H1 (cell line): ENCODE measurements at regions of chr2 and their contacts with region 1.

Region 1: GRCh38 chr2:96856776-96857673 is 791 bp downstream of the ANKRD39 start:
- DNase-seq: peak in 1 of 2 experiments; percentile 73
- H3K4me3 ChIP-seq: peak overlapping the region; percentile 49 to 75 (median 68)
- H3K27ac ChIP-seq: no peak overlapping the region; the same call in 1 of the 2 replicates
- H3K4me1 ChIP-seq: peaks cover 3 to 11% (median 8%) of the 10 kb centered on the region in 4 experiments
- H3K27me3 ChIP-seq: no peaks in the 10 kb centered on the region
- CTCF ChIP-seq: no peak
- EP300 ChIP-seq: no peak
- POLR2A ChIP-seq: peak in 1 of 2 experiments; percentile 63; a peak in 2 of 3 replicates
- RAD21 ChIP-seq: no peak

Region 2: GRCh38 chr2:96739633-96740428 is 117.2 kb before region 1 on chr2 and contains the start of gene LMAN2L:
- CTCF ChIA-PET with region 1: no interaction called
- POLR2A ChIA-PET with region 1: no interaction called
- DNase-seq: peak; percentile 85 to 92
- H3K4me3 ChIP-seq: peak within 1 kb of the TSS; percentile 66 to 97 (median 77)
- H3K27ac ChIP-seq: peak within 1 kb of the TSS; percentile 53
- H3K4me1 ChIP-seq: peaks cover 0 to 3% (median 1%) of the 10 kb centered on the region in 4 experiments; a peak in 3 of 7 replicates
- H3K27me3 ChIP-seq: no peaks in the 10 kb centered on the region
- CTCF ChIP-seq: no peak
- EP300 ChIP-seq: no peak
- POLR2A ChIP-seq: peak in 1 of 2 experiments; percentile 79; a peak in 1 of 3 replicates
- RAD21 ChIP-seq: no peak
- total RNA-seq, gene LMAN2L: 14.3 and 15.7 TPM in 2 replicates

Region 3: DNA sequence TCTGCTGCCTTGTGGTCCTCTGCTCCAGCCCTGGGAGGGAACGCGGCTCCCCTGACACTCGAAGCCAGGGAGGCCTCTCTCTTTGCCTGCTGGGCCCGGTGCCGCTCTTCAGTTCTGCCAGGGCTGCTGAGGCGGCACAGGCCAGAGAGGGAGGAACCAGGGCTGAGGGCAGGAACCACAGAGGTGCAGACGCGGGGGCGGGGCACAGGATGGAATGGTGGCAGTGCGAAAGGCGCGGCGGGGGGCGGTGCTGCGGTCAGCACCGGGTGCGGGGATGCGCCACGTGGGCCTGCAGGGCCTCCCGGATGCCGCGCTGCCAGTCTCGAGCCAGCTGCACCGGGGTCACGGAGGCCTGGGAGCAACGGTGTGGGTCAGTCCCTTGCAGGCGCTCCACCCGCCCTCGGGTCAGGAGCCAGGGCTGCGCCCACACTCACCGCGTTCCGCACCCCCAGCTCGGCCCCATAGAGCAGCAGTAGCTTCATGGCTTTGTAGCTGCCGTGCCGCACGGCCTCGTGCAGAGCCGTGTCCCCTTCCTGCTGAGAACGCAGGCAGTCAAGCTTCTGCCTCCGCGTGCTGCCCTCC is 17.6 kb before region 1 on chr2:
- CTCF ChIA-PET with region 1: interaction called, 22 read pairs
- POLR2A ChIA-PET with region 1: interaction called, 18 read pairs
- DNase-seq: peak in 1 of 2 experiments; percentile 64
- H3K4me3 ChIP-seq: no peak overlapping the region
- H3K27ac ChIP-seq: no peak overlapping the region
- H3K4me1 ChIP-seq: peaks cover 0 to 3% (median 0%) of the 10 kb centered on the region in 4 experiments; a peak in 1 of 7 replicates
- H3K27me3 ChIP-seq: no peaks in the 10 kb centered on the region
- CTCF ChIP-seq: no peak
- EP300 ChIP-seq: no peak
- POLR2A ChIP-seq: peak in 1 of 2 experiments; percentile 8; a peak in 1 of 3 replicates
- RAD21 ChIP-seq: no peak

Region 4: DNA sequence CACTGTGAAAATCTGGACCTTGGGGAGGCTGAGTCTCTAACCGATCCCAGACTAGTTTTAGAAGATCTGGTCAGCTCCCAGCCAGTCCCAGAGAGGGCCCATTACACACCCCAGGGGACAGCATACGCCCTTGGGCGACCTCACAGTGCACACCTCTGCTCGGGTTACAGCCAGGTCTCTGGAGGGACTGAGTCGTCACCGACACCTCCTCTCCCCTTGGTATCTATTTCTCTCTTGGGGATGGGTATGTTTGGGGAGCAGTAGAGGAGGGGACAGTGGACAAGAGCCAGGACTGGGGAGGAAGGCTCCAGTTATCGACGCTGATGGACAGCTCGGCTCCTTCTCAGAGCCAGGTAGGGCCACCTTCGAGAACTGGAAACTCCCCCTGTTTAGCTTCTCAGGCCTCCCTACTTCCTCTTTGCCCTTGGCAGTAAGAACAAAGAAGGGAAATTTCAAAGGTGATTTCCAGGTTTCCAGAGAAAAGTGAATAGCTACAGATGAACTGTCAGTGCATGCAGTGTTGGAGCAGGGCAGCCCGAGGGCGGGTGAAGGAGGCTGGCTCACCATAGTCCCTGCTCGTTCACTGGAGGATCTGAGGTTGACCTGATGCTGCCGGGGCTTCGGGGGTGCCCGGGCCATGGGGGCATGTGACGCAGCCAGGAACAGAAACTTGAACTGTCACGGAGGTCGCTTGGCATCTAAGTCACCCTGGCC is 17.2 kb after region 1 on chr2:
- CTCF ChIA-PET with region 1: interaction called, 48 read pairs
- POLR2A ChIA-PET with region 1: interaction called, 49 read pairs
- DNase-seq: no peak
- H3K4me3 ChIP-seq: no peak overlapping the region
- H3K27ac ChIP-seq: no peak overlapping the region
- H3K4me1 ChIP-seq: peaks cover 11 to 42% (median 28%) of the 10 kb centered on the region in 4 experiments
- H3K27me3 ChIP-seq: peaks cover 0 to 3% (median 0%) of the 10 kb centered on the region in 4 experiments; a peak in 2 of 7 replicates
- CTCF ChIP-seq: no peak
- EP300 ChIP-seq: no peak
- POLR2A ChIP-seq: no peak
- RAD21 ChIP-seq: no peak

Region 5: DNA sequence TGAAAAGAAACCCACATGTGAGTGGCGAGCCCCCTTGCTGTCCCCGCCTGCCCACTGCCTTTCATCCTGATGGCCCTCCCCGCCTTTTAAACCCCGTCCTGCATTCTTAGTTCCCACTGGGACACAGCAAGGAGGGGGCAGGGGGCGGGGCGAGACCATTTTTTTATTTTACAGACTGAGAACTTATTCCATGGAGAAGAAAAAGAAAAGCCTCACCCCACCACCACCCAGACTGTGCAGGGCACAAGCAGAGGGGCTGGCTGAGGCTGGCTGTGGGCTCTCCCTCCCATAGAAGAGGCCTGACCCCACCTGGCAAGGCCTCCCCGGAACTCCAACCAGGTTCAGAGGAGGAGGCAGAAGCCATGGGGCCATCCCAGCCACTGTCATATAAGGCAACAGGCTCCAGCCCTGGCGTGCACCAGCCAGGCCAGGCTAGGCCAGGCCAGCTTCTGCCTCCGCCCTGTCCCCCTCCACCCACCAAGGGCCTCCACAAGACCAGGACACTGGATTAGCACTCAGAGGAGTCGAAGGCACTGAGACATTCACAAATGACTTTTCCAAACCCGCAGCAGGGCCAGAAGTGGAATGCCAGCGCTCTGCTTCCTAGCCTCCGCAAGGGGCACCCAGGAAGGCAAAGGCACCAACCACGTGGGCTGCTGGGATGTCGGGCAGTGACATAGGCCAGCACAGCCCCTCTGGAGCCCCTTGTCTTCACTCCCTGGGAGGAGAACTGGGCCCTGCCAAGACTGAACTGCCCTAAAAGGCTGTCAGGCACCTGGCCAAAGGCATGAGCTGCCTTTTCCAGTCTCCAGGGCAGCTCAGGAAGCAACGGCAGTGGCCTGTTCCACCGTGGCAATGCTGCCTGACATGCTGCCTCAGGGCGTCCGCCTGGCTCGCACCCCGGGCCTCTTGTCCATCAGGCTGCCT is 50.4 kb after region 1 on chr2:
- CTCF ChIA-PET with region 1: interaction called, 6 read pairs
- POLR2A ChIA-PET with region 1: interaction called, 11 read pairs
- DNase-seq: peak in 1 of 2 experiments; percentile 72
- H3K4me3 ChIP-seq: peak overlapping the region in 2 of 4 experiments; percentile 5 to 10; a peak in 3 of 8 replicates
- H3K27ac ChIP-seq: no peak overlapping the region
- H3K4me1 ChIP-seq: peaks cover 0 to 29% (median 25%) of the 10 kb centered on the region in 4 experiments; a peak in 6 of 7 replicates
- H3K27me3 ChIP-seq: peaks cover 0 to 2% (median 0%) of the 10 kb centered on the region in 4 experiments; a peak in 2 of 7 replicates
- CTCF ChIP-seq: no peak
- EP300 ChIP-seq: no peak
- POLR2A ChIP-seq: no peak
- RAD21 ChIP-seq: peak in 1 of 2 experiments; percentile 30; a peak in 1 of 4 replicates

Region 6: DNA sequence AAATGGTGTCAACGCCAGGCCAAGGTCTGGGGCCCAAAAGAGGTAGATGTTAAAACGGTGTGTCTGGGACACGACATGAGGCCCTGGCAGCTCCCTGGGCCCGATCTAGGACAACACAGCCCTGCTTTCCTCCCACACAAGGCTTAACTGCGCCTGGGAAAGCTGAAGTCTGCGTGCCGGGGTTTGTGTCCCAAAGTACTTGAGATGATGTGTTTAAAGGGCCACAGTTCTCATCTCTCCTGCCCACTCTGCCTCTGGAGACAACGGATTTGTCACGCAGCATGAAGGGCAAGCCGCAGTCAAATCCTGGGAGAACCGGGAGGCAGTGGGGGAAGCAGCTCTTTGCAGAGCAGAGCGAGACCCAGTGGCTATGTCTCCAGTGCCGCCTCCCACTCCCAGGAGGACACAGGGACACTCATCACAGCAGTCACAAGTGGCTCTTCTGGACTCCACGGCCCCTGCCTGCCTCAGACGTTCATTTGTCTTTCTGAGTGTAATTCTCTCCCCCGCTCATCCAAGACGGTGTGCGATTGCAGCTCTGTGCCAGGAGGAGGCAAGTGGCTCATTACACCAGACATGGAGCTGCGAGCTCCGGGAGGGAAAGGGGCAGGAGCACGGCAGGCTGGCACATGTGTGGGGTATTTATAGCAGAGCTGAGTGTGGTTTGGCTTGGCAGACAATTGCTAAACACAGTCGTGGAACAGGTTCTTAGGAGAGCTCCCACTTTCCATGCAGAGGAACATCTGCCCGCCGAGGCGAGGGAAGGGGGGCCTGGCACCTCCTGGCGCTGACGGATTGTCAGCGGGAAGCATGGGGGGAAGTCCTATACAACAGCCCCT is 70.6 kb after region 1 on chr2:
- CTCF ChIA-PET with region 1: interaction called, 10 read pairs
- POLR2A ChIA-PET with region 1: interaction called, 4 read pairs
- DNase-seq: no peak
- H3K4me3 ChIP-seq: no peak overlapping the region
- H3K27ac ChIP-seq: no peak overlapping the region
- H3K4me1 ChIP-seq: peaks cover 0 to 3% (median 0%) of the 10 kb centered on the region in 4 experiments; a peak in 2 of 7 replicates
- H3K27me3 ChIP-seq: peaks cover 0 to 3% (median 1%) of the 10 kb centered on the region in 4 experiments; a peak in 1 of 7 replicates
- CTCF ChIP-seq: peak; percentile 16 to 20 (median 20); a peak in 2 of 4 replicates
- EP300 ChIP-seq: no peak
- POLR2A ChIP-seq: no peak
- RAD21 ChIP-seq: peak in 1 of 2 experiments; percentile 30; a peak in 1 of 4 replicates

Region 7: GRCh38 chr2:96951093-96951654 is 94.1 kb after region 1 on chr2:
- CTCF ChIA-PET with region 1: interaction called, 89 read pairs
- POLR2A ChIA-PET with region 1: interaction called, 47 read pairs
- DNase-seq: peak; percentile 75 to 90
- H3K4me3 ChIP-seq: no peak overlapping the region
- H3K27ac ChIP-seq: no peak overlapping the region
- H3K4me1 ChIP-seq: peaks cover 0 to 5% (median 2%) of the 10 kb centered on the region in 4 experiments; a peak in 4 of 7 replicates
- H3K27me3 ChIP-seq: peaks cover 0 to 5% (median 1%) of the 10 kb centered on the region in 4 experiments; a peak in 3 of 7 replicates
- CTCF ChIP-seq: peak; percentile 96 to 99 (median 96)
- EP300 ChIP-seq: no peak
- POLR2A ChIP-seq: no peak
- RAD21 ChIP-seq: peak; percentile 97 to 99

Region 8: GRCh38 chr2:97011977-97012565 is 155.0 kb after region 1 on chr2:
- CTCF ChIA-PET with region 1: interaction called, 12 read pairs
- POLR2A ChIA-PET with region 1: no interaction called
- DNase-seq: no peak
- H3K4me3 ChIP-seq: no peak overlapping the region
- H3K27ac ChIP-seq: no peak overlapping the region
- H3K4me1 ChIP-seq: no peaks in the 10 kb centered on the region
- H3K27me3 ChIP-seq: no peaks in the 10 kb centered on the region
- CTCF ChIP-seq: peak in 2 of 3 experiments; percentile 36 to 40; a peak in 2 of 4 replicates
- EP300 ChIP-seq: no peak
- POLR2A ChIP-seq: no peak
- RAD21 ChIP-seq: peak; percentile 45 to 48